HepG2 (cell line): ENCODE measurements at regions of chr9 and their contacts with region 1.

Region 1: GRCh38 chr9:105064315-105065097 is 136.6 kb upstream of the ABCA1 start:
- DNase-seq: peak; percentile 96
- ATAC-seq: peak; percentile 89
- H3K4me3 ChIP-seq: peak overlapping the region; percentile 1 to 64 (median 46); a peak in 4 of 6 replicates
- H3K27ac ChIP-seq: peak overlapping the region; percentile 63
- H3K4me1 ChIP-seq: peaks cover 62% of the 10 kb centered on the region
- H3K27me3 ChIP-seq: no peaks in the 10 kb centered on the region
- CTCF ChIP-seq: no peak
- EP300 ChIP-seq: peak; percentile 60 to 67; a peak in 3 of 4 replicates
- POLR2A ChIP-seq: no peak; a peak in 1 of 4 replicates
- RAD21 ChIP-seq: no peak

Region 2: DNA sequence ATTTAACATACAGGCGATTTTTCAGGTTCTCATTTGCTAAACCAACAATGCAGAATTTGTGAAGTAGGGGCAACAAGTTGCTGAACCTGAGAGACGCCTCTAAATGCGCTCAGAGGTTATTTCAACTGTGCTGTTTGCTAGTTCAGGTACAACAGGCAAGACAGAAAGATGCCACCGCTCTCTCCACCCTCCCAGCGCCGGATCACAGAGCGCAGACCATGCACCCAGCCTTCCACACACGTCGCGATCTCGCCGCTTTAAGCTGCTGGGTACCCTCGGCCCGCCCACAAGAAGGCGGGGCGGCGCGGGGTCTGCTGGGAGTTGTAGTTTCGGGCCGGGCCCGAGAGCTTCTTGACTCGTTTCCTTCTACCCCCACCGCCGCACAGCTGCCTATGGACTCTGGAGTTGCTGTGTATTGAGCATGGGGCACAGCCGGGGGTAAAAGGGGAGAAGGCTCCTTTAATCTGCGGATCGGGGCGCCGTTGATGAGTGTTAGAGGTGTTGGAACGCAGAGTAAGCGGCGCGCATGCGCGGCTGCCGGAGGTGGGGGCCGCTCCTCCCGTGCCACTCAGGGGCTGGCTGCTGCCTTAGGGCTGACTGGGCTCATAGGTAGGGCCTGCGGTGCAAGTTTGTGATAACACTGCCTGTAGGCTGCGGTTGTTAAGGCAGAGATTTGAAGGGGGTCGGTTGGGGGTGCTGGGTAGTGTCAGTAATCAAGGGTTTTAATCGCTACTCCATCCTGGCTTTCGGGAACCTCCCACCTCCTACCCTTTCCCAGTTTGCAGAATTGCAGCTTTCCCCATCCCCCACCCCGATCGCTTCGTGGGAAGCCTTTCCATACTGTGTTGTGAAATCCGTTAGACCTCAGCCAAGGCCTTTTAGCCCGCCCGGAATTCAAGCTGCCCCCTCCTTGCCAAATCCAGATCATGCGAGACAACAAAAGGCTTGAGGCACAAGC is 96.2 kb before region 1 on chr9:
- CTCF ChIA-PET with region 1: no interaction called
- POLR2A ChIA-PET with region 1: interaction called, 12 read pairs
- in situ Hi-C with region 1: no loop called
- intact Hi-C with region 1: loop called (anchors 2 kb)
- DNase-seq: peak; percentile 74
- ATAC-seq: peak; percentile 94
- H3K4me3 ChIP-seq: peak overlapping the region; percentile 81 to 98 (median 92)
- H3K27ac ChIP-seq: peak overlapping the region; percentile 59
- H3K4me1 ChIP-seq: peaks cover 25% of the 10 kb centered on the region
- H3K27me3 ChIP-seq: no peaks in the 10 kb centered on the region
- CTCF ChIP-seq: no peak; the same call in 1 of the 2 replicates
- EP300 ChIP-seq: no peak; a peak in 1 of 4 replicates
- POLR2A ChIP-seq: 0 out of 4 replicates have a peak, but pooled peaks of 1 of the 2 experiments have one; percentile 59
- RAD21 ChIP-seq: no peak

Region 3: DNA sequence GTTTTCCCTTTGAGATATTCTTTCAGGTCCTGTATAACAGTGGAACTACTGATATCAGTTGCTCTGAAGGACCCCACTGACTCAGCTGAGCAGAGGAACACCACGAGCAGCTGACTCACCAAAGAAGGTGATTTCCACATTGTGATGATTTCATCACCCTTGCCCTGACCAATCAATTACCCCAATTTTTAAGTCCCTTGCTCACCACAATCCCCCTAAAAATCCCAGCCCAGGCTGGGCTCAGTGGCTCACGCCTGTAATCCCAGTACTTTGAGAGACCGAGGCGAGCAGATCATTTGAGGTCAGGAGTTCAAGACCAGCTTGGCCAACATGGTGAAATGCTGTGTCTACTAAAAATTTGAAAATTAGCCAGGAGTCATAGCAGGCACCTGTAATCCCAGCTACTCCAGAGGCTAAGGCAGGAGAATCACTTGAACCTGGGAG is 11.3 kb before region 1 on chr9:
- CTCF ChIA-PET with region 1: no interaction called
- POLR2A ChIA-PET with region 1: interaction called, 36 read pairs
- in situ Hi-C with region 1: no loop called
- intact Hi-C with region 1: loop called (anchors 1 kb)
- DNase-seq: no peak
- ATAC-seq: no peak; the same call in 2 of the 3 replicates
- H3K4me3 ChIP-seq: no peak overlapping the region
- H3K27ac ChIP-seq: no peak overlapping the region
- H3K4me1 ChIP-seq: peaks cover 20% of the 10 kb centered on the region
- H3K27me3 ChIP-seq: no peaks in the 10 kb centered on the region
- CTCF ChIP-seq: no peak
- EP300 ChIP-seq: no peak; a peak in 1 of 4 replicates
- POLR2A ChIP-seq: no peak
- RAD21 ChIP-seq: no peak